GM18951 (cell line): ENCODE measurements at regions of chr3 and their contacts with region 1.

Region 1: GRCh38 chr3:58177747-58178527 is 32.8 kb downstream of the DNASE1L3 start:
- POLR2A ChIP-seq: no peak

Region 2: DNA sequence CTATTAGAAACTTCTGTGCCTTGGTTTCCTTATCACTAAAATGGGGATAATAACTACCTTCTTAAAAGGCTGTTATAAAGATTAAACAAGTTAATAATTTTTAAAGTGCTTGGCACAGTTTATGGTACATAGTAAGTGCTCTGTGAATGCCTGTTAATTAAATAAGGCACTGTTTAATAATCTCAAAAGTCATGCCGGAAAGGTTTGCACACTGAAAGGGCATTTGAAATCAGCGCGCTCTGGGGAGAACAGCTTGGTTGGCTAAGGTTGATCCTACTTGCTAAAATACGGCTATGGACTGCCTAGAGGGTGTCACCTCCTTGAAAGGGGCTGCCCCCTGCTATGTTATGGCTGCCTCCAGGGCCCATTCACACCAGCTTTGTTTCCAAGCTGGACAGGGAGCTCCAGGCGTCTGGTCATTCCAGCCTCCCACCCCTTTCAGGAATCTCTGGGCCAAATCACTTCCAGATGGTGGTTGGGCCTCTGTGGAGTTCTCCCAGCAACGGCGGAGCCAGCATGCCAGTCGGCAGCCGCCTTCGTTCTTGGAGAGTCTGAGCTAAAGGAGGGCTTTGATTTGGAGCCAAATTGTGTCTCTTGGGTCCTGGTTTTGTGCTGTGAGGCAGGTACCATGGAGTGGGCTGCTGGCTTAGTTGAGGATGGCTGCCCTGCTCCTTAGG is 163.8 kb before region 1 on chr3:
- in situ Hi-C with region 1: loop called (anchors 10 kb)
- POLR2A ChIP-seq: no peak

Region 3: DNA sequence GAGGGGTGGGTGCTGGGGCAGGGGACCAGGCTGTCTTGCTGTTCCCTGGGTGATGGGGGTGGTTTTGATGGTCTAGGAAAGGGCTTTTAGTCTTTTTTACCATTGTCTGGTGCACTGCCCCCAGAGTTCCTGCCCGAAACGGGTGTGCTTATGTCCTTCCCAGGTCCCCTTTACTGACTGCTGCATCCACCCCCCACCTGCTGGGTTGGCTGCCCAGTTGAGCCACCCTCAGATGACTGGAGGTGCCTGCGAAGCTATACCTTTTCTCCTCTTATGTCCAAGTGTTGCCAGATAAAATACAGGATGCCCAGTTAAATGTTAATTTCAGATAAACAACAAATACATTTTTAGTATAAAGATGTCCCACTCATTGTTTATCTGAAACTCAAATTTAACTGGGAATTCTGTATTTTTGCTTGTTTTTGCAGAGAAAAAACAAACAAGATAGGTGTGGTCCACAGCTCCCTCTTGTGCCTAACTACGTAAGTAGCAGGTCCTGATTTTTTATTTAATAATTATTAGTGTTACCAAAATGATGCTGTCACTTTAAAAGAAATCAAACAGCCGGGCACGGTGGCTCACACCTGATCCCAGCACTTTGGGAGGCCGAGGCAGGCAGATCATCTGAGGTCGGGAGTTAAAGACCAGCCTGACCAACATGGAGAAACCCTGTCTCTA is 122.0 kb after region 1 on chr3:
- in situ Hi-C with region 1: loop called (anchors 5 kb)
- POLR2A ChIP-seq: no peak

Region 4: GRCh38 chr3:58532794-58533220 is 354.9 kb after region 1 on chr3:
- in situ Hi-C with region 1: loop called (anchors 25 kb)
- POLR2A ChIP-seq: no peak